Activated B cell treated with CpG ODN at 0.5 μM for 24 hours (primary cell): ENCODE measurements at regions of chr17 and their contacts with region 1.

Region 1: GRCh38 chr17:1516388-1517161 is at the start of gene INPP5K:
- DNase-seq: peak; percentile 96
- ATAC-seq: peak; percentile 90
- H3K4me3 Mint-ChIP-seq: peak within 1 kb of the TSS; percentile 89
- H3K27ac Mint-ChIP-seq: peak within 1 kb of the TSS; percentile 86
- H3K4me1 Mint-ChIP-seq: peaks cover 19% of the 10 kb centered on the region
- H3K27me3 Mint-ChIP-seq: no peaks in the 10 kb centered on the region
- CTCF ChIP-seq: no peak
- total RNA-seq, gene INPP5K: 46.0 and 50.0 TPM in 2 replicates

Region 2: GRCh38 chr17:1241929-1242328 is 274.6 kb before region 1 on chr17:
- CTCF ChIA-PET with region 1: no interaction called
- POLR2A ChIA-PET with region 1: no interaction called
- intact Hi-C with region 1: no loop called
- DNase-seq: no peak
- ATAC-seq: no peak
- H3K4me3 Mint-ChIP-seq: no peak overlapping the region
- H3K27ac Mint-ChIP-seq: no peak overlapping the region
- H3K4me1 Mint-ChIP-seq: no peaks in the 10 kb centered on the region
- H3K27me3 Mint-ChIP-seq: peaks cover 12% of the 10 kb centered on the region
- CTCF ChIP-seq: no peak

Region 3: GRCh38 chr17:1275962-1276736 is 240.4 kb before region 1 on chr17:
- CTCF ChIA-PET with region 1: interaction called, 3 read pairs
- POLR2A ChIA-PET with region 1: no interaction called
- intact Hi-C with region 1: loop called (anchors 1 kb)
- DNase-seq: peak; percentile 65
- ATAC-seq: peak; percentile 87
- H3K4me3 Mint-ChIP-seq: peak overlapping the region; percentile 65
- H3K27ac Mint-ChIP-seq: no peak overlapping the region
- H3K4me1 Mint-ChIP-seq: peaks cover 12% of the 10 kb centered on the region
- H3K27me3 Mint-ChIP-seq: peaks cover 8% of the 10 kb centered on the region
- CTCF ChIP-seq: peak; percentile 16

Region 4: GRCh38 chr17:1399679-1400512 is 116.7 kb before region 1 on chr17 and contains the start of gene YWHAE:
- CTCF ChIA-PET with region 1: interaction called, 7 read pairs
- POLR2A ChIA-PET with region 1: interaction called, 33 read pairs
- intact Hi-C with region 1: loop called (anchors 1 kb)
- DNase-seq: peak; percentile 94
- ATAC-seq: peak; percentile 85
- H3K4me3 Mint-ChIP-seq: peak within 1 kb of the TSS; percentile 98
- H3K27ac Mint-ChIP-seq: peak within 1 kb of the TSS; percentile 98
- H3K4me1 Mint-ChIP-seq: peaks cover 44% of the 10 kb centered on the region
- H3K27me3 Mint-ChIP-seq: no peaks in the 10 kb centered on the region
- CTCF ChIP-seq: no peak
- total RNA-seq, gene YWHAE: 253 and 263 TPM in 2 replicates

Region 5: DNA sequence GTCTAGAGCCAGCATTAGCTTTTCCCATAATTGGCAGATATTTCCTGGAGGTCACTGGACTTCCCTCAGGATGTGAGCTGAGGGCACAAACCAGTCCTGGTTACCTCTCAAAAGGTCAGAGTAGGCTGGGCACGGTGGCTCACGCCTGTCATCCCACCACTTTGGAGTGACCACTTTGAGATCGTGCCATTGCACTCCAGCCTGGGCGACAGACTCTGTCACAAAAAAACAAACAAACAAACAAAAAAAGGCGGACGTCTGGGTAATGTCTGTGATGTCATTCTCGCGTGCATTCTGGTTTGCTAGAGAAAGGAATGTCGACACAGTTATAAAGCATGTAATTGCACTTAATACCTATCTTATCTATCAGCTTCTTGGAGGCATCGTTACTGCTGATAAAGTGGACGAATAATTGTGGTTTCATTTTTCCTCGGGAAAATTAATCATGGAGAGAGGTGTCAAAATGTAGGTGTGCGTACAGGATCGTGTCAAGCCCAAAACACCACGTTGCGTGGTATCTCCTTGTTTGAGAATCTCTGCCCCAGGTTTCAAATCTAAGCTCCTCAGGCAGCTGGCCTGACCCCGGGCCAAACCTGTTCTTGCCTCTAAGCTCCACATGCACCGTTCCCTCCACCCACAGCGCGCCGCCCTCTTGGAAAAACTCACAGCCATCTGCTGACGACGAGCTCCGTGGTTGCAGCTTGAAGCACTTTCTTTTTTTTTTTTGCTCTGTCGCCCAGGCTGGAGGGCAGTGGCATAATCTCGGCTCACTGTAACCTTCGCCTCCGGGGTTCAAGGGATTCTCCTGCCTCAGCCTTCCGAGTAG is 54.1 kb before region 1 on chr17:
- CTCF ChIA-PET with region 1: no interaction called
- POLR2A ChIA-PET with region 1: interaction called, 17 read pairs
- intact Hi-C with region 1: no loop called
- DNase-seq: no peak
- ATAC-seq: no peak
- H3K4me3 Mint-ChIP-seq: peak overlapping the region; percentile 66
- H3K27ac Mint-ChIP-seq: peak overlapping the region; percentile 73
- H3K4me1 Mint-ChIP-seq: peaks cover 37% of the 10 kb centered on the region
- H3K27me3 Mint-ChIP-seq: no peaks in the 10 kb centered on the region
- CTCF ChIP-seq: no peak

Region 6: DNA sequence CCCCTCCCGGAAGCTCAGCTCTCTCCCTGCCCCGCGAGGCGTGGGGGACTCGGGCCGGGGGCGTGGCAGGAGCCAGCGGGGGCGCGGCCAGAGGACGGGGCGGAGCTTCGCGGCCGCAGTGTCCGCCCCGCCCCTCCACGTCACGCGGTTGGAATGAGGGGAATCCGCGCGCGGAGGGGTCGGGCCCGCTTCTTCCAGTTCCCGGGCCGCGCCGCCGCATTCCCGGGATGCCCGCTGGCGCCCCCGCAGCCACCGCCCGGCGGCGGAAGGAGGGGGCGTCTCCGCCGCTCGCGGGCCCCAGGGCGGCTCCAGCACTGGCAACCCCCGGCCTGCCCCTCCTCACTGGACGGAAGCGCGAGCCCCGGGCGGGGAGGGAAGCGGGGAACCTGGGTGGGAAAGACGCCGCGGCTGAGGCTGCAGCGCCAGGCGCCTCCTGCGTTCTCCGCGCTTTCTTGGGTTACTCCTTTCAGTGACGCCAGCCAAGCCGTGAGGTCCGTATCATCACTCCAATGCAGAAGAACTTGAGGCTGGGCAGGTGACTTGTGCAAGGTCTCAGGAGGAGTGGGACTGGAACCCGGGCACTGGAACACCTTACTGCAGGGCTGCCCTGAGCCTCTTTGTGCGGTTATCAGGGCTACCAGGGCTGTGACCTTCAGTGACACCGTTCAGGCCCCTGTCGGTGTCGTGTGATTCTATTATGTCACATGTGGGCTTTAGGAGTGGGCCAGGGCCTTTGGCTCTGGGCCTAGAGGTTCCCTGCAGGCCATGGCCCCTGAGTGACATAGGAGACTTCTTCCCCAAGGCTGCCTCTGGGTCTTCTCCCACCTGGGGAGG is 28.3 kb before region 1 on chr17:
- CTCF ChIA-PET with region 1: interaction called, 12 read pairs
- POLR2A ChIA-PET with region 1: interaction called, 19 read pairs
- intact Hi-C with region 1: loop called (anchors 1 kb)
- DNase-seq: peak; percentile 85
- ATAC-seq: peak; percentile 19
- H3K4me3 Mint-ChIP-seq: peak overlapping the region; percentile 84
- H3K27ac Mint-ChIP-seq: peak overlapping the region; percentile 83
- H3K4me1 Mint-ChIP-seq: peaks cover 58% of the 10 kb centered on the region
- H3K27me3 Mint-ChIP-seq: no peaks in the 10 kb centered on the region
- CTCF ChIP-seq: no peak

Region 7: DNA sequence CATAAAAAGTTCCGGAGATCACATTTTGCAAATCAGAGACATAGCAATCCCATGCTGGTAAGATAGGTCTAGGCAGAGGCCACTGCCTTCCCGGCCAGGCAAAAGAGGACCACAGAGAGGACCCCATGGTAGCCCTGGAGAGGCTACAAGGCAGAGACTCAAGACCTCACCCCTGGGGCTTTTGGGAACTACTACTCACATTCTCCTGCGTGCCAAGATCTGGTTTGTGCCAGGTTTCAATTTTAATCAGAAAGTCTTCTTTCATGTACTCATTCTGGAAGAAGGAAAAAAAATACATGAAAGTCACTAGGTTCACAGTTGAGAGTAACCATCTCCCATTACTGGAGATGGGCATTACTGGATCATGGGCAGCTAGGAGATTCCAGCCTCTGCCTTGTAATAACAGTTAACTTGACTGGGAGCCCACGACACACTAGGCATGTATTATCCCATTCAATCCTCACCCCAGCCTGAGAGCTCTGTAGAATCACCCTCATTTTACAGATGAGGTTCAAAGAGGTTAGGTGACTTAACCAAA is 24.9 kb after region 1 on chr17:
- CTCF ChIA-PET with region 1: no interaction called
- POLR2A ChIA-PET with region 1: no interaction called
- intact Hi-C with region 1: no loop called
- DNase-seq: no peak
- ATAC-seq: no peak
- H3K4me3 Mint-ChIP-seq: no peak overlapping the region
- H3K27ac Mint-ChIP-seq: no peak overlapping the region
- H3K4me1 Mint-ChIP-seq: no peaks in the 10 kb centered on the region
- H3K27me3 Mint-ChIP-seq: no peaks in the 10 kb centered on the region
- CTCF ChIP-seq: no peak

Region 8: DNA sequence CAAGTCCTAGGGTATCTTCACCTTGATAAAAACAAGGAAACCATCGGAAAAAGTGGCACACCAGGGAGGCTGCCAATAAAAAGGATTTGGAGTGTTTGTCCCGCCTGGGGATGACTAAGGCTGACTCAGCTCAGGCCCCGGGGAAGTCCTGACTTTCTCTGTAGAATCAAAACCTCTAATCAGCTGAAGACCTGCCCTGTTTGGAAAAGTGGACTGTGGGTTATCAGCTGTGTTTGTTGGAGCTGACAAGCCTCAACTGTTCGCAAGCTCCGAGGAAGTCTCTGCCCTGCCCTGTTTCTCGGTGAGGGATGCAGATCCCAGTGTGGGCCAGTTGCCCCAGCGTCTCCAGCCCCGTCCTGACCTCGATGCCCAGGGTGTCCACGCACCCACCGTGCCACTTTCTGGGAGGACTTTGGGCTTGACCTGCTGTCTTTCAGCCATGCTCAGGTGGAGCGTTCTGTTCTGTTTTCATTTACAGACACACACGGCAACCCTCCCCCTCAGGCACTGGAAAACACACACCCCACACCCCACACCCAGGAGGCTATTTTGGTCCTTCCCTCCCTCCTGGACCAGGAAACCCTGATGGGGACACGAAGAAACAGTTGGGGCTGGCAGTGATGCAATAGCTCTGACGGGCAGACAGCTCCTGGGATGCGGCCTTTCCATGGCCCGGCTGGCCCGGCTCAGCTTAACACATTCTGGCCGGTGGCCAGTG is 73.6 kb after region 1 on chr17:
- CTCF ChIA-PET with region 1: no interaction called
- POLR2A ChIA-PET with region 1: no interaction called
- intact Hi-C with region 1: no loop called
- DNase-seq: no peak
- ATAC-seq: no peak
- H3K4me3 Mint-ChIP-seq: no peak overlapping the region
- H3K27ac Mint-ChIP-seq: peak overlapping the region; percentile 46
- H3K4me1 Mint-ChIP-seq: peaks cover 48% of the 10 kb centered on the region
- H3K27me3 Mint-ChIP-seq: no peaks in the 10 kb centered on the region
- CTCF ChIP-seq: no peak

Region 9: DNA sequence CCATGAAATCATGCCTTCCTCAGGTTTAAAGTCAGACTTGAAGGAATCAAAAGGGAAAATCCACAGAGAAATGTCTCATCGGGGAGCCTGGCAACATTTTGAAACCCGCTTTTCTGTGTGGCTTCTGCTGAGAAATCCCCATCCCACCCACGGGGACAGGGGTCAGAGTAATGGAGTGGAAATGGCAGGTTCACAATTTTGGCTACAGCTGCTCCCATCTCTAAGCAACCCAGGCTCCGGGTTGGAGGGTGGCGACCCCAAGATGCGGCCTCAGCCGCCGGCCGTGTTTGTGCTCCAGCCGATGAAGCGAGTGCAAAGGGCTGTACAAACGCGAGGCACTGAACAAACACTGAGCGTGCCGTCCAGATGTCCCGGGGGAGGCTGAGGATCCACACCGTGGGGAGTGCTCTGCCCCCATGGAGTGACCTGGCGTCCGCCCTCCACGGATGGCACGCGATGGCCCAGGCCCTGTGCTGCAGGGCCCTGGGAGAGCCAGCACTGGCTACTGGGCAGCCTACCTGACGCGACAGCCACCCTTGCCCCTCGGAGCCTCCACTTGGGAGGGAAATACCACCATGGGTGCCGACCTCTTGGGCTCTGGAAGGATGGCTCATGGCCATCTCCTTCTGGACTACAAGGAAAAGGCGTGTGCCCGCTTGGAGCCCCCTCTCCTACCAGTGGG is 89.9 kb after region 1 on chr17:
- CTCF ChIA-PET with region 1: no interaction called
- POLR2A ChIA-PET with region 1: interaction called, 12 read pairs
- intact Hi-C with region 1: no loop called
- DNase-seq: no peak
- ATAC-seq: no peak
- H3K4me3 Mint-ChIP-seq: peak overlapping the region; percentile 67
- H3K27ac Mint-ChIP-seq: peak overlapping the region; percentile 86
- H3K4me1 Mint-ChIP-seq: peaks cover 36% of the 10 kb centered on the region
- H3K27me3 Mint-ChIP-seq: no peaks in the 10 kb centered on the region
- CTCF ChIP-seq: no peak

Region 10: GRCh38 chr17:1648963-1649843 is 132.6 kb after region 1 on chr17:
- CTCF ChIA-PET with region 1: interaction called, 8 read pairs
- POLR2A ChIA-PET with region 1: interaction called, 8 read pairs
- intact Hi-C with region 1: loop called (anchors 1 kb)
- DNase-seq: peak; percentile 93
- ATAC-seq: peak; percentile 69
- H3K4me3 Mint-ChIP-seq: peak overlapping the region; percentile 69
- H3K27ac Mint-ChIP-seq: no peak overlapping the region
- H3K4me1 Mint-ChIP-seq: peaks cover 41% of the 10 kb centered on the region
- H3K27me3 Mint-ChIP-seq: no peaks in the 10 kb centered on the region
- CTCF ChIP-seq: no peak

Region 11: GRCh38 chr17:1693339-1693738 is 176.8 kb after region 1 on chr17:
- CTCF ChIA-PET with region 1: no interaction called
- POLR2A ChIA-PET with region 1: no interaction called
- intact Hi-C with region 1: no loop called
- DNase-seq: no peak
- ATAC-seq: no peak
- H3K4me3 Mint-ChIP-seq: no peak overlapping the region
- H3K27ac Mint-ChIP-seq: no peak overlapping the region
- H3K4me1 Mint-ChIP-seq: no peaks in the 10 kb centered on the region
- H3K27me3 Mint-ChIP-seq: peaks cover 7% of the 10 kb centered on the region
- CTCF ChIP-seq: no peak